K562 (cell line): ENCODE measurements at regions of chr4 and their contacts with region 1.

Region 1: GRCh38 chr4:120071192-120071795 is 4.6 kb upstream of the MAD2L1 start:
- DNase-seq: peak; percentile 19 to 79 (median 30)
- ATAC-seq: no peak
- H3K4me3 ChIP-seq: no peak overlapping the region
- H3K27ac ChIP-seq: no peak overlapping the region
- H3K4me1 ChIP-seq: peaks cover 3 to 13% of the 10 kb centered on the region in 2 experiments; a peak in 3 of 5 replicates
- H3K27me3 ChIP-seq: no peaks in the 10 kb centered on the region
- CTCF ChIP-seq: peak; percentile 28 to 69 (median 41); a peak in 4 of 6 replicates
- EP300 ChIP-seq: no peak
- POLR2A ChIP-seq: no peak
- RAD21 ChIP-seq: peak; percentile 63 to 64

Region 2: GRCh38 chr4:119841361-119841760 is 229.9 kb before region 1 on chr4:
- CTCF ChIA-PET with region 1: no interaction called
- POLR2A ChIA-PET with region 1: no interaction called
- in situ Hi-C with region 1: no loop called
- intact Hi-C with region 1: no loop called
- DNase-seq: no peak
- ATAC-seq: no peak
- H3K4me3 ChIP-seq: no peak overlapping the region
- H3K27ac ChIP-seq: no peak overlapping the region
- H3K4me1 ChIP-seq: no peaks in the 10 kb centered on the region
- H3K27me3 ChIP-seq: no peaks in the 10 kb centered on the region
- CTCF ChIP-seq: no peak
- EP300 ChIP-seq: no peak
- POLR2A ChIP-seq: no peak
- RAD21 ChIP-seq: no peak

Region 3: GRCh38 chr4:121096629-121097028 is 1025.3 kb after region 1 on chr4:
- CTCF ChIA-PET with region 1: interaction called, 5 read pairs
- POLR2A ChIA-PET with region 1: no interaction called
- in situ Hi-C with region 1: no loop called
- intact Hi-C with region 1: loop called (anchors 1 kb)
- DNase-seq: peak in 1 of 4 experiments; percentile 6
- ATAC-seq: no peak
- H3K4me3 ChIP-seq: no peak overlapping the region
- H3K27ac ChIP-seq: no peak overlapping the region
- H3K4me1 ChIP-seq: no peaks in the 10 kb centered on the region
- H3K27me3 ChIP-seq: no peaks in the 10 kb centered on the region
- CTCF ChIP-seq: peak in 1 of 3 experiments; percentile 34; a peak in 2 of 6 replicates
- EP300 ChIP-seq: no peak
- POLR2A ChIP-seq: no peak
- RAD21 ChIP-seq: peak; percentile 30 to 41; a peak in 3 of 4 replicates

Region 4: DNA sequence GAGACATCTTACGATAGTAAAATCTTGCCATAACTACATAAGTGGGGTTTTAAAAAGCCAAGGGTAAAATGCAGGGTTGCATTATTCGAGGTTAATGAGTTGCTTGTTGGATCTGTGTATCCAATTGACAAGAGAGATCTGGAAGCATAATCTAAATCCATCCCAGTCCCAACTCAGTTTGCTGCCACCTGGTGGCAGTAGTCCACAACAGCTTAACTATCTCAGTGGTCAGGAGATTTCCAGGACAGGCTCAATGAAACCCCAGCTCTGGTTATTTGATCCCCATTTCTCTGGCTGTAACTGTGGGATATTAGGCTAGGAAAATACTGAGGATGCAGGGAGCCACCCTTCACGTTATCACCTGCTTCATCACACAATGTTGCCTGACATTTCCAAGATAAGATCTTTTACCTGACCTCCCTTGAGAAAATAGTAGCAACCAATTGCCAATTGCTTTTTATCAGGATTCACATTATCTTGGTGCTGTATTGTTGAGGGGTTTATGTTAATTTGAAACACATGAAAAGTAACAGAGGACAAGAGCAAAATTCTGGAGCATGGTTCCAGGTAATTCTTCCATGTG is 1181.0 kb after region 1 on chr4:
- CTCF ChIA-PET with region 1: interaction called, 4 read pairs
- POLR2A ChIA-PET with region 1: no interaction called
- in situ Hi-C with region 1: no loop called
- intact Hi-C with region 1: loop called (anchors 10 kb)
- DNase-seq: peak; percentile 67 to 74 (median 69)
- ATAC-seq: peak; percentile 93
- H3K4me3 ChIP-seq: no peak overlapping the region
- H3K27ac ChIP-seq: no peak overlapping the region
- H3K4me1 ChIP-seq: no peaks in the 10 kb centered on the region
- H3K27me3 ChIP-seq: no peaks in the 10 kb centered on the region
- CTCF ChIP-seq: peak; percentile 68 to 71 (median 69)
- EP300 ChIP-seq: no peak
- POLR2A ChIP-seq: no peak
- RAD21 ChIP-seq: peak; percentile 44 to 54